ENCODE measurements at regions of chr18 and their contacts with region 1.

Region 1: GRCh38 chr18:8849696-8850095 is 144.3 kb downstream of the MTCL1 start:
- DNase-seq: no peak
- ATAC-seq: no peak
- H3K4me3 ChIP-seq: no peak overlapping the region
- H3K27ac ChIP-seq: no peak overlapping the region
- H3K4me1 ChIP-seq: no peaks in the 10 kb centered on the region
- H3K27me3 ChIP-seq: no peaks in the 10 kb centered on the region
- CTCF ChIP-seq: no peak

Region 2: GRCh38 chr18:9000733-9001132 is 151.0 kb after region 1 on chr18:
- CTCF ChIA-PET with region 1: no interaction called
- POLR2A ChIA-PET with region 1: interaction called, 10 read pairs
- in situ Hi-C with region 1: no loop called
- intact Hi-C with region 1: no loop called
- DNase-seq: no peak
- ATAC-seq: no peak
- H3K4me3 ChIP-seq: no peak overlapping the region
- H3K27ac ChIP-seq: no peak overlapping the region
- H3K4me1 ChIP-seq: no peaks in the 10 kb centered on the region
- H3K27me3 ChIP-seq: no peaks in the 10 kb centered on the region
- CTCF ChIP-seq: no peak